ENCODE measurements at regions of chr15 and their contacts with region 1.

Region 1: DNA sequence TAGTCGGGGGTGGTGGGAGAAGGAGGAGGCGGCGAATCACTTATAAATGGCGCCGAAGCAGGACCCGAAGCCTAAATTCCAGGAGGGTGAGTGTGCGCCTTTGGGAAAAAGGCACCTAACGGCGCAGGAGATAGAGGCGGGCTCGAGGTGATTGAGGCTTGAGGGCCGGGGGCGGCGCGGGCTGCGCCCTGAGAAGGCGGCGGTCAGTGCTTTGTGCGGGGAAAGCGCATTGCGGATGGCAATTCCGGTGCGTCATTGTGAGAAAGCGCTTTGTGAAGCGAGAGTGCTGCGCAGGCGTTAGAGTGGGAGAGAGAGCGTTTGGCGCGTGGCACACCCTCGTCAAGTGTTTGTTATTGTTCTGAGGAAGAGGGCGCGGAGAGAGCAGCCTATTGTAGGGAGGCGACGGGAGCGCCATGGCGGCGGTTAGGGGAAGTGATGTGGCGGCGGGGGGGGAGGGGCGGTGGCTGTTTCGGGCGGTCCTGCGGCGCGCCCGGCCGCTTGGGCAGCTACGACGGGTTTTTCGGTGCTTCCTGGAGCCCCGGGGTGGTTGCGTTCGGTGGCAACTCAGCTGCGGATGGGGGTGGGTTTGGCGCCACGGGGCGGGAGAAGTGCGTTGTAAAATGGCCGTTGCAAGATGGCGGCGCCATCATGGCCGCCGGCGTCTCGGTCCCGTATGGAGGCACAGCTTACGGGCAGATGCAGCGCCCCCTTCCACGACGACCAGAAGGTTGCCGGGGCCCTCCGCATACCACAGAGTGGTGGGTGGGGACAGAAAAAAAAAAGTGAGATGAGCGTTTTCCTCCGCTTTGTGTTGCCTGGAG is 492 bp downstream of the MORF4L1 start:
- DNase-seq: peak; percentile 89 to 93 (median 91)
- H3K4me3 ChIP-seq: peak overlapping the region; percentile 59 to 91
- H3K4me3 Mint-ChIP-seq: peak overlapping the region; percentile 96 to 100 (median 99)
- H3K27ac ChIP-seq: peak overlapping the region; percentile 100
- H3K27ac Mint-ChIP-seq: peak overlapping the region; percentile 100
- H3K4me1 ChIP-seq: peaks cover 43% of the 10 kb centered on the region
- H3K4me1 Mint-ChIP-seq: peaks cover 22 to 67% (median 35%) of the 10 kb centered on the region in 4 donors
- H3K27me3 ChIP-seq: no peaks in the 10 kb centered on the region
- H3K27me3 Mint-ChIP-seq: no peaks in the 10 kb centered on the region

Region 2: DNA sequence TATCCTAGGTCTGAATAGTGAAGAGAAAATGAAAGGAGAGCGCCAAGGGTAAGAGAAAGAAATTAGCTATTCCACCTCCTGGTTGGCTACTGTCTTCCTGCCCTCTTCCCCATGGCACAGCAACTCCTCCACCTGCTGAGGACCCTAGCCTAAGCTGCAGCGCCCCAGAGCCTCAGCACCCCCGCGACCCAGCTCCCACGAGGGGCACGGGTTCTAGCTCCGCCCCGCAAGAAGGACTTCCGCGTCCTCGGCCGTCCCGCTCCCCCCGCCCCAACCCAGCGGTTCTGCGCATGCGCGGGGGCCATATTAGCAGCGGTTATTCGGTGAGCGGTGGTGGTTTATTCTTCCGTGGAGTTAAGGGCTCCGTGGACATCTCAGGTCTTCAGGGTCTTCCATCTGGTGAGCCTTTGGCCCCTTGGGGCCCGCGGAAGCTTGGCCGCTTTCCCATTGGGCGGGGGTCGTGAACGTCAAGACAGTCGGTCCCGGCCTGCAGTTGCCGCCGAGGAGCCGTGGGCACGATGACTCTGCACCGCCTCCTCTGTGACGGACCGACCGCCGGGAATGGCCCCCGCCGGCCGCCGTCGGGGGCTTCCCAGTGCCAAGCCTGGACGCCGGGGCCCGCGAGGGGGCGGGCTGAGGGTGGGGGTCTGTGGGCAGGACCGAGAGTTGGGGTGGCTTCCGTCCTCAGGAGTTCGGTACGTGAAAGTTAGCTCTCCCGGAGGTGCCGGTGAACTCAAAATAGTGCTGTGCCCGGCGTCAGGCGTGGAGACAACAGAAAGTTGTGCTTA is 332.8 kb before region 1 on chr15 and contains the start of gene PSMA4:
- CTCF ChIA-PET with region 1: no interaction called
- POLR2A ChIA-PET with region 1: interaction called, 8 read pairs
- intact Hi-C with region 1: loop called (anchors 2 kb)
- DNase-seq: peak; percentile 92 to 97 (median 94)
- H3K4me3 ChIP-seq: peak within 1 kb of the TSS; percentile 70 to 96
- H3K4me3 Mint-ChIP-seq: peak within 1 kb of the TSS; percentile 92 to 99 (median 98)
- H3K27ac ChIP-seq: peak within 1 kb of the TSS; percentile 97
- H3K27ac Mint-ChIP-seq: peak within 1 kb of the TSS; percentile 89 to 100 (median 99)
- H3K4me1 ChIP-seq: peaks cover 30% of the 10 kb centered on the region
- H3K4me1 Mint-ChIP-seq: peaks cover 17 to 38% (median 27%) of the 10 kb centered on the region in 4 donors
- H3K27me3 ChIP-seq: no peaks in the 10 kb centered on the region
- H3K27me3 Mint-ChIP-seq: no peaks in the 10 kb centered on the region
- total RNA-seq, gene PSMA4: 89.8 to 91.7 TPM

Region 3: GRCh38 chr15:78671626-78672211 is 201.5 kb before region 1 on chr15:
- CTCF ChIA-PET with region 1: no interaction called
- POLR2A ChIA-PET with region 1: no interaction called
- intact Hi-C with region 1: no loop called
- DNase-seq: no peak
- H3K4me3 ChIP-seq: no peak overlapping the region
- H3K4me3 Mint-ChIP-seq: no peak overlapping the region
- H3K27ac ChIP-seq: no peak overlapping the region
- H3K27ac Mint-ChIP-seq: no peak overlapping the region
- H3K4me1 ChIP-seq: no peaks in the 10 kb centered on the region
- H3K4me1 Mint-ChIP-seq: no peaks in the 10 kb centered on the region
- H3K27me3 ChIP-seq: no peaks in the 10 kb centered on the region
- H3K27me3 Mint-ChIP-seq: peaks cover 5 to 7% of the 10 kb centered on the region in 2 donors

Region 4: GRCh38 chr15:78750566-78750965 is 122.6 kb before region 1 on chr15:
- CTCF ChIA-PET with region 1: no interaction called
- POLR2A ChIA-PET with region 1: no interaction called
- intact Hi-C with region 1: loop called (anchors 10 kb)
- DNase-seq: peak in 1 of 5 donors; percentile 5
- H3K4me3 ChIP-seq: no peak overlapping the region
- H3K4me3 Mint-ChIP-seq: peak overlapping the region in 6 of 8 donors; percentile 36 to 73 (median 51)
- H3K27ac ChIP-seq: no peak overlapping the region
- H3K27ac Mint-ChIP-seq: peak overlapping the region in 2 of 7 donors; percentile 46 to 57
- H3K4me1 ChIP-seq: no peaks in the 10 kb centered on the region
- H3K4me1 Mint-ChIP-seq: peaks cover 2 to 9% (median 4%) of the 10 kb centered on the region in 4 donors
- H3K27me3 ChIP-seq: no peaks in the 10 kb centered on the region
- H3K27me3 Mint-ChIP-seq: no peaks in the 10 kb centered on the region

Region 5: GRCh38 chr15:78828920-78829319 is 44.3 kb before region 1 on chr15:
- CTCF ChIA-PET with region 1: no interaction called
- POLR2A ChIA-PET with region 1: no interaction called
- intact Hi-C with region 1: no loop called
- DNase-seq: no peak
- H3K4me3 ChIP-seq: no peak overlapping the region
- H3K4me3 Mint-ChIP-seq: peak overlapping the region in 4 of 8 donors; percentile 1 to 40 (median 5)
- H3K27ac ChIP-seq: no peak overlapping the region
- H3K27ac Mint-ChIP-seq: peak overlapping the region in 1 of 7 donors; percentile 48
- H3K4me1 ChIP-seq: no peaks in the 10 kb centered on the region
- H3K4me1 Mint-ChIP-seq: peaks cover 0 to 20% (median 0%) of the 10 kb centered on the region in 4 donors
- H3K27me3 ChIP-seq: no peaks in the 10 kb centered on the region
- H3K27me3 Mint-ChIP-seq: peaks cover 4 to 14% of the 10 kb centered on the region in 2 donors

Region 6: DNA sequence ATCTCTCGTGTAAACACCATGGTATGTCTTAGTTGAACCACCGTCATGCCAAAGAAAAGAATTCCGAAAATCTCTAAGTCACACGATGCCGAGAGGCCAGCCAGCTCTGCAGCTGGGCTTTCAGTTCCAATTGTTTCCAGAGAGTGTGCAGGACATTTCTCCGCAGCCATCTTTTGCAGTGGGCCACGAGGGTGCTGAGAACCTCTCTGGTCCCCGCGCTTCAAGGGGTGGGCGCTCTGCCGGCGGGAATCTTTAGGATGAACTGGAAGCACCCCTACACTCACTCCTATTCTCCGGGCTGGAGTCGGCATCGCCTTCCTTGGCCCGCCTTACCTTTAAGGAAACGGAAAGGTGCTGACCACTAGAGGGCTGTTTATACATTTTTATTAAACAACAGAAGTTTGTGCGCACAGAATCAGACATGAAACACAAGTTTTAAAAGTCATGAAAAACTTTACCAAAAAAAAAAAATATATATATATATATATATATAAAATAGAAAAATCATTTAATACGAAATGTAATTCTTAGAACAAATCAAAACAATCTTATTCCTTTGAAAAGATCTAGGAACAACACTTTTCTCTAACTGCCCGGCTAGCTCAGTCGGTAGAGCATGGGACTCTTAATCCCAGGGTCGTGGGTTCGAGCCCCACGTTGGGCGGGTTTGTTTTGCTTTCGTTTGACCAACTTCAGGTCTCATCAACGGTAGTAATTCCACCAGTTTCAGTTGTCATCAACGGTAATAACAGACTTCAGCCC is 13.0 kb before region 1 on chr15:
- CTCF ChIA-PET with region 1: interaction called, 5 read pairs
- POLR2A ChIA-PET with region 1: interaction called, 31 read pairs
- intact Hi-C with region 1: loop called (anchors 1 kb)
- DNase-seq: peak; percentile 63 to 86 (median 67)
- H3K4me3 ChIP-seq: peak overlapping the region in 1 of 2 donors; percentile 47
- H3K4me3 Mint-ChIP-seq: peak overlapping the region; percentile 77 to 92 (median 84)
- H3K27ac ChIP-seq: no peak overlapping the region
- H3K27ac Mint-ChIP-seq: peak overlapping the region; percentile 36 to 98 (median 82)
- H3K4me1 ChIP-seq: peaks cover 3% of the 10 kb centered on the region
- H3K4me1 Mint-ChIP-seq: peaks cover 3 to 10% (median 5%) of the 10 kb centered on the region in 4 donors
- H3K27me3 ChIP-seq: no peaks in the 10 kb centered on the region
- H3K27me3 Mint-ChIP-seq: peaks cover 0 to 2% of the 10 kb centered on the region in 2 donors

Region 7: DNA sequence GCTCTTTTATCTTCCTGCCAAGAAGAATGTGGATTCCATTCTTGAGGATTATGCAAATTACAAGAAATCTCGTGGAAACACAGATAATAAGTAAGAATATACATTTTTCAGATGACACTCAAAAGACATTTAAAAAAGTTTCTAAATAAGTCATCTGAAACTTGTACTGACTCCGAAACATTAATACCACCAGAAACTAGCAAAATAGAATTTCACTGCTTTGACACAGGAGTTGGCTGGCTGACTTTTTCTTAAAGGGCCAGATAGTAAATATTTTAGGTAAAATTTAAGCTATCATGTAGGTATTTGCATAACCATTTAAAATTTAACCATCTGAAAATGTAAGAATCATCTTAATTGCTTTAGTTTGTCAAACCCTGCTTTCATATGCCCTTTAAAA is 20.4 kb after region 1 on chr15:
- CTCF ChIA-PET with region 1: interaction called, 9 read pairs
- POLR2A ChIA-PET with region 1: interaction called, 6 read pairs
- intact Hi-C with region 1: loop called (anchors 2 kb)
- DNase-seq: no peak
- H3K4me3 ChIP-seq: no peak overlapping the region
- H3K4me3 Mint-ChIP-seq: no peak overlapping the region
- H3K27ac ChIP-seq: no peak overlapping the region
- H3K27ac Mint-ChIP-seq: peak overlapping the region in 1 of 7 donors; percentile 26
- H3K4me1 ChIP-seq: no peaks in the 10 kb centered on the region
- H3K4me1 Mint-ChIP-seq: peaks cover 2 to 15% (median 10%) of the 10 kb centered on the region in 4 donors
- H3K27me3 ChIP-seq: no peaks in the 10 kb centered on the region
- H3K27me3 Mint-ChIP-seq: no peaks in the 10 kb centered on the region

Region 8: GRCh38 chr15:78938658-78939488 is 65.7 kb after region 1 on chr15:
- CTCF ChIA-PET with region 1: interaction called, 4 read pairs
- POLR2A ChIA-PET with region 1: interaction called, 8 read pairs
- intact Hi-C with region 1: loop called (anchors 2 kb)
- DNase-seq: peak; percentile 32 to 51 (median 46)
- H3K4me3 ChIP-seq: no peak overlapping the region
- H3K4me3 Mint-ChIP-seq: peak overlapping the region; percentile 47 to 86 (median 71)
- H3K27ac ChIP-seq: peak overlapping the region; percentile 29
- H3K27ac Mint-ChIP-seq: peak overlapping the region; percentile 72 to 86 (median 79)
- H3K4me1 ChIP-seq: peaks cover 53% of the 10 kb centered on the region
- H3K4me1 Mint-ChIP-seq: peaks cover 16 to 49% (median 32%) of the 10 kb centered on the region in 4 donors
- H3K27me3 ChIP-seq: no peaks in the 10 kb centered on the region
- H3K27me3 Mint-ChIP-seq: no peaks in the 10 kb centered on the region